ENCODE measurements at regions of chr16 and their contacts with region 1.

Region 1: DNA sequence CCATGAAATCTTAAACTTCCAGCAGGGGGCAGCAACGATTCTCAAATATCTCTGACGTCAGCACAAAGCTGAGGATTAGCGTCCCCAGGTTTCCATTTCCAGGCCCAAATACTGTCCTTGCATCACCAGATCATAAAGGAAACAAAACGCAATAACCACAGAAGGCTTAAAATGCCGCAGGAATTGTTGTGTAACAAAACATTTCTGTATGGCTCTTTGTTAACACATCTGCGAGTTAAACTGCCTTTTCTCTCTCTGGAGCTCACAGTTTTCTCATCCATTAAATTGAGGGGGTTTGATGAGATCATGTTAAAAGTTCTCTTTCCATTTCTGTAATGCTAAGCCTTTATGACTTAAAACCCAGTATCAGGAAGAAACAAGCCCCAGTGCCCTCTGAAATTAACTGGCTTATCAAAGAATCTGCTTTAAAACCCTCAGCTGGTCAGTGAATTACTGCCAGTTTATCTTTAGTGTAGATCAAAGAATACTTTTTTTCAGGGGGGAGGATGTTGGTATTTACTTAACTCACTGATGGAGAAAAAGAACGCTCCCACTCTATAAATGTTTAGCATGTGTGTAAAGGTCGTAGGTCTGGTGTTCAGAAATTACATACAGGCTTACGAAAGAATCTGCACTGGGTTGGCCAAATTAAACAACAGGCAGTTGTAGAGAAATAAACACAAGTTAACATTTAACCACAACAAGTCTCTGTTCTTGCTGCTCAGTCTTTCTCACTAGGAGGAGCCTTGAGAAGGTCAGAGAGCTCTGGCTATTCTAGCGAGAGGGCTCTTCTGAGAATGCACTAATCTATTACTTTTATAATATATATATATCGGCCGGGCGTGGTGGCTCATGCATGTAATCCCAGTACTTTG is 10.6 kb upstream of the TERF2 start:
- DNase-seq: peak; percentile 91 to 92
- H3K4me3 ChIP-seq: no peak overlapping the region
- H3K4me3 Mint-ChIP-seq: peak overlapping the region; percentile 52
- H3K27ac Mint-ChIP-seq: peak overlapping the region; percentile 78
- H3K4me1 ChIP-seq: peaks cover 53% of the 10 kb centered on the region
- H3K4me1 Mint-ChIP-seq: peaks cover 38% of the 10 kb centered on the region
- H3K27me3 ChIP-seq: no peaks in the 10 kb centered on the region
- H3K27me3 Mint-ChIP-seq: no peaks in the 10 kb centered on the region
- CTCF ChIP-seq: peak; percentile 51 to 68

Region 2: GRCh38 chr16:69233124-69233523 is 163.3 kb before region 1 on chr16:
- CTCF ChIA-PET with region 1: no interaction called
- POLR2A ChIA-PET with region 1: no interaction called
- intact Hi-C with region 1: no loop called
- DNase-seq: no peak
- H3K4me3 ChIP-seq: no peak overlapping the region
- H3K4me3 Mint-ChIP-seq: no peak overlapping the region
- H3K27ac Mint-ChIP-seq: no peak overlapping the region
- H3K4me1 ChIP-seq: no peaks in the 10 kb centered on the region; the same call in 1 of the 2 replicates
- H3K4me1 Mint-ChIP-seq: no peaks in the 10 kb centered on the region
- H3K27me3 ChIP-seq: no peaks in the 10 kb centered on the region
- H3K27me3 Mint-ChIP-seq: no peaks in the 10 kb centered on the region
- CTCF ChIP-seq: no peak

Region 3: GRCh38 chr16:69330286-69331109 is 65.9 kb before region 1 on chr16 and contains the start of gene PDF:
- CTCF ChIA-PET with region 1: no interaction called
- POLR2A ChIA-PET with region 1: no interaction called
- intact Hi-C with region 1: no loop called
- DNase-seq: peak; percentile 97 to 98
- H3K4me3 ChIP-seq: peak within 1 kb of the TSS; percentile 98
- H3K4me3 Mint-ChIP-seq: peak within 1 kb of the TSS; percentile 87
- H3K27ac Mint-ChIP-seq: peak within 1 kb of the TSS; percentile 80
- H3K4me1 ChIP-seq: peaks cover 29% of the 10 kb centered on the region
- H3K4me1 Mint-ChIP-seq: peaks cover 22% of the 10 kb centered on the region
- H3K27me3 ChIP-seq: no peaks in the 10 kb centered on the region
- H3K27me3 Mint-ChIP-seq: no peaks in the 10 kb centered on the region
- CTCF ChIP-seq: no peak
- total RNA-seq, gene PDF: 42.1 and 50.7 TPM in 2 replicates

Region 4: DNA sequence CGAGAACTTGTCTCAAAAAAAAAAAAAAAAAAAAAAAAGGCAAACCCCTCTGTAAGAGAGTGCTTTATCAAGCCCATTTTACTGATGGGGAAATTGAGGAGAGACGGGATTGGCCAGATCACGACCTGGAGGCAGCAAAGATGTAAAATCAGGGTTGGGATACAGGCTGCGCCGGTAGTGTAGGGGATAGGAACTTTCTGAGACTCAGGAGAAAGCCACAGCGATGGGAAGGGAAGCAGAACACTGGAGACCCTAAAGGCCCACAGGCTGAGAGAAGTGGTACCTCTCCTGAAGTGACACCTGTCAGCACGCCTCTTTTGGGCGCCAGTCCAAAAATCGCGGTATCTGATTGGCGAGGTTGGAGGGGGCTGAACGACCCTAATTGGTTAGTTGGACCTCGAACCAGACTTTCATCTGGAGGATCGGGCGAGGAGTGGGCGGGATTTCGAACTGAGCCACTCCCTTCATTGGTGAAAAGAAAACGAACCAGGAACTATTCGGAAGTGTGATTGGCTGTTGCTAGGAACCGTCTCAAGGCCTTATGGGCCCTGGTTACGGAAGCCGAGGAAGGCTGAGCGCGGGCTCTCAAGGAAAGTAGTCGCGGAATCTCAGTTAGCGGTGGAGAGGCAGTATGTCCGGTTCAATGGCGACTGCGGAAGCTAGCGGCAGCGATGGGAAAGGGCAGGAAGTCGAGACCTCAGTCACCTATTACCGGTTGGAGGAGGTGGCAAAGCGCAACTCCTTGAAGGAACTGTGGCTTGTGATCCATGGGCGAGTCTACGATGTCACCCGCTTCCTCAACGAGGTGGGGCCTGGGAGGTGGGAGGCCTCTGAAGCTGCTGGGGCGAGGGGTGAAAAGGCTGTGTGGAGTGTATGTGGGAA is 27.9 kb after region 1 on chr16 and contains the start of gene CYB5B:
- CTCF ChIA-PET with region 1: interaction called, 13 read pairs
- POLR2A ChIA-PET with region 1: interaction called, 8 read pairs
- intact Hi-C with region 1: loop called (anchors 1 kb)
- DNase-seq: peak; percentile 98 to 99
- H3K4me3 ChIP-seq: peak within 1 kb of the TSS; percentile 96
- H3K4me3 Mint-ChIP-seq: peak within 1 kb of the TSS; percentile 91
- H3K27ac Mint-ChIP-seq: peak within 1 kb of the TSS; percentile 93
- H3K4me1 ChIP-seq: peaks cover 14% of the 10 kb centered on the region
- H3K4me1 Mint-ChIP-seq: peaks cover 12% of the 10 kb centered on the region
- H3K27me3 ChIP-seq: no peaks in the 10 kb centered on the region
- H3K27me3 Mint-ChIP-seq: no peaks in the 10 kb centered on the region
- CTCF ChIP-seq: no peak
- total RNA-seq, gene CYB5B: 355 TPM in 2 replicates

Region 5: DNA sequence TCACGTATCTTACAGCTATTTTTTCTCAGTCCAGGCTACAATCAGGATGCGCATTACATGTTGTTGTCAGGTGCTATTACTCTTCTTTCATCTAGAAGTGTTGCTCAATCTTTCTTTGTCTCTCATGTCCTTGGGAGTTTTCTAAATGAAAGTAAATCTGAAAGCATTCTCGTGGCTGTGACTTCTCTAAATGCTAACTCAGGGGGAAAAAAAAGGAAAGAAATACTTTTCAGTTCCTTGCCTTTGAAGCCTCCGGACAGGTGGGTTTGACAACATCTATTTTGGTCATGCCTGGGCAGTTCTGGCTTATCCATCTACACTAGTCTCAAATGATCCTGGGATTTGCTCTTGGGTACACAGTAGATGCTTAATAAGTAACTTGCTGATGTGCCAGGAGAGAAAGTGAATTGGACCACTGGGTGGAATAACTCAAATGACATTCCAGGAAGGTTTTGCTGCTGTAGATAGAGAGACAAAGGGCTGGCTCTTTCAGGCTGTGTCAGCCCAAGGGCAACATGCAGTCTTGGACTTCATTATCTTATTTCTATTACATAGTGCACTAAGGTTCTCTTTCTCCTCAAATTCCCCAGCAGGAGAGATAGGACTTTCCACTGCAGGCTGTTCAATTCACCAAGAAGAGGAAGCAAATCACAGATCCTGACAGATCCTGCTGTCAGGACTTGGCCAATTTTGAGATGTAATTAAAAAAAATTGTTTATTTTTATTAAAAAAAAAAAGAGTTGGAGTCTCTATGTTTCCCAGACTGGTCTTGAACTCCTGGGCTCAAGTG is 105.7 kb after region 1 on chr16:
- CTCF ChIA-PET with region 1: no interaction called
- POLR2A ChIA-PET with region 1: no interaction called
- intact Hi-C with region 1: loop called (anchors 1 kb)
- DNase-seq: peak; percentile 90 to 91
- H3K4me3 ChIP-seq: no peak overlapping the region
- H3K4me3 Mint-ChIP-seq: peak overlapping the region; percentile 61
- H3K27ac Mint-ChIP-seq: peak overlapping the region; percentile 82
- H3K4me1 ChIP-seq: peaks cover 31% of the 10 kb centered on the region
- H3K4me1 Mint-ChIP-seq: peaks cover 38% of the 10 kb centered on the region
- H3K27me3 ChIP-seq: no peaks in the 10 kb centered on the region
- H3K27me3 Mint-ChIP-seq: no peaks in the 10 kb centered on the region
- CTCF ChIP-seq: no peak

Region 6: DNA sequence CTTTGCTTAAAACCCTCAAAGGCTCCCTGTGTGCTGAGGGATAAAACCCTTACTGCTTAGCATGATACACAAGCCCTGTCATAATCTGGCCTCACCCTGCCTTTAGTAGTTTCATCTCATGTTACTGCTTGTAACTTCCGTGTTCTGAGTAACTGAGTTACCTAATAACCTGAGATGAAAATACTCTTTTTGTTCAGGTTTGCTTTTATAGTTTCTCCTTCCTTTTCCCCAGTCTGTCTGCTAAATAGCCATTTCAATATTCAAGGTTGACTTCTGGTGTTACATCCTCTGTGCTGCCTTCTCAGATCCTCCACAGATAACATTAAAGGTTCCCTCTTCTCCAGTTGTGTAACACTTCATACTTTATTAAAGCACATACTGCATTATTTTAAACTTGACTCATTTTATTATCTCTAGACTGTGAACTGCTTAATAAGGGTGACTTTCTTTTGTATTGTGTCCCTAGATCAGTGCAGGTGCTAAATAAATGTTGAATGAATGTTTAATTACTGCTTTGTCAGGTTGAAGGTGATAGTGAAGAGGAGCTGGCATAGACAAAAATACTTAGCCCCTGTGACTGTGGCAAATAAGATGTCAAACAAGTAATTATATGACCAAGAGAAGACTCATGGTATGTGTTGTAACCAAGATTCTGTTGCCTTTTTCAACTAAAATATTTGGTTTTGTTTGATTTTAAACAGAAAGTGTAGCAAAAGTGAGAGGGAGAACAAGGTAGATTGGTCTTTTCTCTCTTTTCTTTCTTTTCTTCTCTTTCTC is 217.1 kb after region 1 on chr16:
- CTCF ChIA-PET with region 1: interaction called, 5 read pairs
- POLR2A ChIA-PET with region 1: no interaction called
- intact Hi-C with region 1: loop called (anchors 1 kb)
- DNase-seq: peak in 1 of 2 experiments; percentile 40
- H3K4me3 ChIP-seq: no peak overlapping the region
- H3K4me3 Mint-ChIP-seq: peak overlapping the region; percentile 3
- H3K27ac Mint-ChIP-seq: peak overlapping the region; percentile 6
- H3K4me1 ChIP-seq: peaks cover 61% of the 10 kb centered on the region
- H3K4me1 Mint-ChIP-seq: peaks cover 54% of the 10 kb centered on the region
- H3K27me3 ChIP-seq: no peaks in the 10 kb centered on the region
- H3K27me3 Mint-ChIP-seq: no peaks in the 10 kb centered on the region
- CTCF ChIP-seq: no peak

Region 7: GRCh38 chr16:69709456-69710084 is 313.1 kb after region 1 on chr16:
- CTCF ChIA-PET with region 1: no interaction called
- POLR2A ChIA-PET with region 1: no interaction called
- intact Hi-C with region 1: loop called (anchors 1 kb)
- DNase-seq: peak in 1 of 2 experiments; percentile 62
- H3K4me3 ChIP-seq: no peak overlapping the region
- H3K4me3 Mint-ChIP-seq: no peak overlapping the region
- H3K27ac Mint-ChIP-seq: no peak overlapping the region
- H3K4me1 ChIP-seq: peaks cover 7% of the 10 kb centered on the region
- H3K4me1 Mint-ChIP-seq: peaks cover 13% of the 10 kb centered on the region
- H3K27me3 ChIP-seq: no peaks in the 10 kb centered on the region
- H3K27me3 Mint-ChIP-seq: no peaks in the 10 kb centered on the region
- CTCF ChIP-seq: peak; percentile 67 to 82